Naive thymus-derived CD4-positive, alpha-beta T cell (primary cell): ENCODE measurements at regions of chr14 and their contacts with region 1.

Region 1: DNA sequence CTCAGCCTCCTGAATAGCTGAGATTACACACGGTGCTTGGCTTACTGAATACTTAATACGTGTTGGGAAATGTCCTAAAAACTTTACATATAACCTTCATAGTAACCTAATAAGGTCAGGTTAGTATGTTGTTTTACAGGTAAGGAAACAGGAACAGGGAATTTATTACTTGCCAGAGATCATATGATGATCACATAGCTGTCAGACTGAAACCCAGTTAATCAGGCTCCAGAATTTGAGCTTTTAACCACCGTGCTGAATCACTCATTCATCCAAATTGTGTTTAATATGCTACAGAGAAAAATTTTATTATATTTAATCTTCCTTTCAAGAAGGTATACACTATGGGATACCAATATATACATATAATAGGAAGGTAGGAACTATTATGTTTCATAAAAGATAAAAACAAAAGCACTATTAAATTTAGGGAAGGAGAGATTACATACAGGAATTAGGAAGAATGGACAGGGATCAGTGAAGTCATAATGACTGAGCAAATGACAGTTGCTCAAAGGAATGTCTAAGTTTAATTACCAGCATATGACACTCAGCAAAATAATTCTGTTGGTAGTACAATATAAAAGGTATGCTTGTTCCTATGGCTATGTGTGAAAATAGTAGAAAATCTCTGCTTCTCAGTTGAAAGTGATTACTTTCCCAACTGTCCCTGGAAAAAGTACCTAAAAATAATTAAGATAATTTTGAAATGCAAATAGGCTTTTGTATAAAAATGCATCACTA is 59.3 kb downstream of the HEATR5A start:
- DNase-seq: no peak
- ATAC-seq: no peak
- H3K4me3 ChIP-seq: no peak overlapping the region
- H3K4me3 Mint-ChIP-seq: no peak overlapping the region
- H3K27ac ChIP-seq: no peak overlapping the region
- H3K27ac Mint-ChIP-seq: no peak overlapping the region
- H3K4me1 ChIP-seq: no peaks in the 10 kb centered on the region
- H3K4me1 Mint-ChIP-seq: peaks cover 0 to under 1% (median 0%) of the 10 kb centered on the region in 7 donors
- H3K27me3 ChIP-seq: no peaks in the 10 kb centered on the region
- H3K27me3 Mint-ChIP-seq: no peaks in the 10 kb centered on the region

Region 2: DNA sequence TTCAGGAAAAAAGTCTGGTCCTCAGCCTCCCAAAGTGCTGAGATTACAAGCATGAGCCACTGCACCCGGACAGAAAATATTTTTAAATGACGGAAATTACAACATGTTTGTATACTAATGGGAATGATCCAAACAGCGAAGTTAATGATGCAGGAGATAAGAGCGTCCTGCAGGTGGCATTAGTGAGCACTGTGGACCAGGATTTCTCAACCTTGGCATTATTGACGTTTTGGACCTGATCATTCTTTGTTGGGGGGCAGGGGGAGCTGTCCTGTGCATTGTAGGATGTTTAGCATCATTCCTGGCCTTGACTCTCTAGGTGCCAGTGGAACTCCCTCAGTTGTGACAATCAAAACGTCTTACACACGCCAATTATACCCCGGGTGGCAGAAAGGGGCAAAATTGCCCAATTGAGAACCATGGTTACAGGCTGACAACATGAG is 704.9 kb before region 1 on chr14:
- CTCF ChIA-PET with region 1: no interaction called
- POLR2A ChIA-PET with region 1: no interaction called
- intact Hi-C with region 1: loop called (anchors 1 to 2 kb)
- DNase-seq: peak in 5 of 9 donors; percentile 6 to 31 (median 29)
- ATAC-seq: peak; percentile 72
- H3K4me3 ChIP-seq: no peak overlapping the region
- H3K4me3 Mint-ChIP-seq: no peak overlapping the region
- H3K27ac ChIP-seq: no peak overlapping the region
- H3K27ac Mint-ChIP-seq: no peak overlapping the region
- H3K4me1 ChIP-seq: no peaks in the 10 kb centered on the region
- H3K4me1 Mint-ChIP-seq: no peaks in the 10 kb centered on the region
- H3K27me3 ChIP-seq: no peaks in the 10 kb centered on the region
- H3K27me3 Mint-ChIP-seq: no peaks in the 10 kb centered on the region

Region 3: GRCh38 chr14:31084385-31084784 is 276.7 kb before region 1 on chr14:
- CTCF ChIA-PET with region 1: no interaction called
- POLR2A ChIA-PET with region 1: no interaction called
- intact Hi-C with region 1: loop called (anchors 2 kb)
- DNase-seq: no peak
- ATAC-seq: no peak
- H3K4me3 ChIP-seq: no peak overlapping the region
- H3K4me3 Mint-ChIP-seq: no peak overlapping the region
- H3K27ac ChIP-seq: no peak overlapping the region
- H3K27ac Mint-ChIP-seq: no peak overlapping the region
- H3K4me1 ChIP-seq: no peaks in the 10 kb centered on the region
- H3K4me1 Mint-ChIP-seq: no peaks in the 10 kb centered on the region
- H3K27me3 ChIP-seq: no peaks in the 10 kb centered on the region
- H3K27me3 Mint-ChIP-seq: no peaks in the 10 kb centered on the region

Region 4: DNA sequence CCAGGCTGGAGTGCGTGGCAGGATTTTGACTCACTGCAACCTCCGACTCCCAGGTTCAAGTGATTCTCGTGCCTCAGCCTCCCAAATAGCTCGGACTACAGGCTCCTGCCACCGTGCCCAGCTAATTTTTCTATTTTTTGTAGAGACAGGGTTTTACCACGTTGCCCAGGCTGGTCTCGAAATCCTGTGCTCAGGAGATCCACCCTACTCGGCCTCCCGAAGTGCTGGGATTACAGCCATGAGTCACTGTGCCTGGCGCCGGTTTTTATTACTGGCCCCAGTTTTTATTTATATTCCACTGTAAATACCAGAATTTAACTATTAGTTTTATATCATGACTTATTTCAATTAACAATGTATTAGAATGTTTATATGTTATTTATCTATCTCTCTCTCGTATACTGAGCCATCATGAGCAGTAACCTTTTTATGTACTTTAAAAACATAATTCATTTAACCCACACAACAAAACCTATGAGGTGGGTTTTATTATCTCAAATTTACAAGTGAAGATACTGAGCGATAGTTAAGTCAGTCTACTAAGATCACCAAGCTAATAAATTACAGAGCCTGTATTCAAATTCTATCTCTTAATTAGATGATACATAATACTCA is 201.3 kb before region 1 on chr14:
- CTCF ChIA-PET with region 1: no interaction called
- POLR2A ChIA-PET with region 1: no interaction called
- intact Hi-C with region 1: loop called in 1 of 2 experiments (anchors 5 kb)
- DNase-seq: no peak
- ATAC-seq: no peak
- H3K4me3 ChIP-seq: no peak overlapping the region
- H3K4me3 Mint-ChIP-seq: no peak overlapping the region
- H3K27ac ChIP-seq: no peak overlapping the region
- H3K27ac Mint-ChIP-seq: no peak overlapping the region
- H3K4me1 ChIP-seq: no peaks in the 10 kb centered on the region
- H3K4me1 Mint-ChIP-seq: peaks cover 0 to 5% (median 0%) of the 10 kb centered on the region in 7 donors
- H3K27me3 ChIP-seq: no peaks in the 10 kb centered on the region
- H3K27me3 Mint-ChIP-seq: no peaks in the 10 kb centered on the region

Region 5: DNA sequence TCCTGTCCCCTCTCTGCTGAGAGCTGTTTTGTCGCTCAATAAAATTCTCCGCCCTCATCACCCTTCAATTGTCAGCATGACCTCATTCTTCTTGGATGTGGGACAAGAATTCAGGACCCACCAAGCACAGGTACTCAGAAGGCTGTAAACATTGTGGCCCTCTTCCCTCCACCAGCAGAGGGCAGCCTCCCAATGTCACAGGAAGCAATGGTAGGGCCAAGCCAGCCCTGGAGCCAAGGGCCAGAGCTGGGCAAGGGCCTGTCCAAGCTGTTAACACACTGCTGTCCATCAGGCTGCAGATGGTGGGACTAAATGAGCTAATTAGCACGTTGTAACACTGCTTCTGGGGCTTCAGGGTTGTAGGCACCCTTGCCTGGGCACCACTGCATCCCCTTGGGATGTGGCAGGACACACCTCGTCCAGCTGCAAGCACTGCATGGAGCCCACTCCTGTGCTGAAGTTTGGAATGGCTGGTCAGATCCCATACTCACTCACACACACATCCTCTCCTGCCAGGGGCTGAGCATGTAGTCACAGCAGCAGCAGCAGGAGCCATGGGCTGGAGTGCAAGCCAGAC is 90.8 kb before region 1 on chr14:
- CTCF ChIA-PET with region 1: no interaction called
- POLR2A ChIA-PET with region 1: no interaction called
- intact Hi-C with region 1: loop called in 1 of 2 experiments (anchors 2 kb)
- DNase-seq: peak in 1 of 9 donors; percentile 26
- ATAC-seq: no peak
- H3K4me3 ChIP-seq: no peak overlapping the region
- H3K4me3 Mint-ChIP-seq: no peak overlapping the region
- H3K27ac ChIP-seq: no peak overlapping the region
- H3K27ac Mint-ChIP-seq: no peak overlapping the region
- H3K4me1 ChIP-seq: no peaks in the 10 kb centered on the region
- H3K4me1 Mint-ChIP-seq: peaks cover 0 to 10% (median 0%) of the 10 kb centered on the region in 7 donors
- H3K27me3 ChIP-seq: no peaks in the 10 kb centered on the region
- H3K27me3 Mint-ChIP-seq: no peaks in the 10 kb centered on the region

Region 6: DNA sequence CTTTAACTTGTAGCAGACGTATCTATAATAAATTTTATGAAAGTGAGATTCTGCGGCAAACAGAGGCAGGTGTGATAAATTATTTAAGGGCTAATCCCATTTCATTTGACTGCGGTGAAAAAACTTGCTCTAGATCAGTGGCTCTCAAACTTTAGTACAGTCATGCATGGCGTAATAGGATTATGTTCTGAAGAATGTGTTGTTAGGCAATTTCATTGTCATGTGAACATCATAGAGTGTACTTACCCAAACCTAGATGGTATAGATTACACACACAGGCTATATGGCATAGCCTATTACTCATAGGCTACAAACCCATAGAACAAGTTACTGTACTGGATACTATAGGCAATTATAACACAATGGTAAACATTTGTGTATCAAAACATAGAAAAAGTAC is 24.4 kb before region 1 on chr14:
- CTCF ChIA-PET with region 1: no interaction called
- POLR2A ChIA-PET with region 1: no interaction called
- intact Hi-C with region 1: no loop called
- DNase-seq: no peak
- ATAC-seq: no peak
- H3K4me3 ChIP-seq: no peak overlapping the region
- H3K4me3 Mint-ChIP-seq: no peak overlapping the region
- H3K27ac ChIP-seq: no peak overlapping the region
- H3K27ac Mint-ChIP-seq: no peak overlapping the region
- H3K4me1 ChIP-seq: no peaks in the 10 kb centered on the region
- H3K4me1 Mint-ChIP-seq: no peaks in the 10 kb centered on the region
- H3K27me3 ChIP-seq: no peaks in the 10 kb centered on the region
- H3K27me3 Mint-ChIP-seq: no peaks in the 10 kb centered on the region